T-cell (primary cell): ENCODE measurements at regions of chr9 and their contacts with region 1.

Region 1: DNA sequence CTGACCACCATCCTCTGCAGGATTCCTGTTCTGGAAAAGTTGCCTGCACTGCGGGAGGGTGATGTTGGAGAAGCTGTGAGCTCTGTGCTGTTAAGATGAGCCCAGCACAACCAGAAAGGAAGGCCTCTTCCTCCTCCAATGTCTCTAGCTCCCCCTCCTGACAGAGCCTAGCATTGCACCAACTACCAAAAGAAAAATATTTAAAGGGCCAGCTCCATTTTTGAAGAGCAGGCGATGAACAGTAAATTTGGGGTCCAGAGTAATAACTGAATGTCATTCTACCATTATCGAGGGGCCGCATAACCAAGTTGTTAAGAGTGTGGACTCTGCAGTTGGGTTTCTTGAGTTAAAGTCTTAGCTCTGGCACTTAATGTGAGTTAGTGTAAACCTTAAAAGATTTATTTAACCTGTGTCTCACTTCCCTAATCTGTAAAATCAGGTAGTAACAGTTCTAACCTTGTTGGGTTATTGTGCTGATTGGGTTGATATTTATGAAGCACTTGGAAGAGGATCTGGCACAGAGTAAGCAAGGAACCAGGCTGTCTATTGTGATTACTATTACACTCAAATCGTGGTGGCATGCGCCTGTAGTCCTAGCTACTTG is 3.9 kb downstream of the TEX53 start:
- DNase-seq: peak; percentile 48 to 88 (median 75)
- ATAC-seq: peak; percentile 81 to 93 (median 91)
- H3K4me3 ChIP-seq: no peak overlapping the region
- H3K4me3 Mint-ChIP-seq: no peak overlapping the region
- H3K27ac ChIP-seq: no peak overlapping the region
- H3K27ac Mint-ChIP-seq: peak overlapping the region in 1 of 2 donors; percentile 28
- H3K4me1 ChIP-seq: peaks cover 7 to 11% of the 10 kb centered on the region in 2 experiments
- H3K4me1 Mint-ChIP-seq: peaks cover 21 to 22% (median 22%) of the 10 kb centered on the region in 3 donors
- H3K27me3 ChIP-seq: no peaks in the 10 kb centered on the region
- H3K27me3 Mint-ChIP-seq: no peaks in the 10 kb centered on the region

Region 2: GRCh38 chr9:113886466-113886865 is 767.2 kb before region 1 on chr9:
- CTCF ChIA-PET with region 1: no interaction called
- POLR2A ChIA-PET with region 1: no interaction called
- DNase-seq: peak in 1 of 35 experiments; percentile 7
- ATAC-seq: no peak
- H3K4me3 ChIP-seq: peak overlapping the region in 1 of 2 donors; percentile 8
- H3K4me3 Mint-ChIP-seq: peak overlapping the region; percentile 62 to 75 (median 71)
- H3K27ac ChIP-seq: no peak overlapping the region
- H3K27ac Mint-ChIP-seq: peak overlapping the region in 1 of 2 donors; percentile 68
- H3K4me1 ChIP-seq: peaks cover 0 to 4% of the 10 kb centered on the region in 2 experiments
- H3K4me1 Mint-ChIP-seq: peaks cover 11 to 21% (median 20%) of the 10 kb centered on the region in 3 donors
- H3K27me3 ChIP-seq: no peaks in the 10 kb centered on the region
- H3K27me3 Mint-ChIP-seq: no peaks in the 10 kb centered on the region

Region 3: GRCh38 chr9:114405294-114406034 is 248.2 kb before region 1 on chr9:
- CTCF ChIA-PET with region 1: interaction called, 54 to 121 read pairs
- POLR2A ChIA-PET with region 1: no interaction called
- DNase-seq: peak; percentile 57 to 91 (median 76)
- ATAC-seq: peak; percentile 93 to 100 (median 97)
- H3K4me3 ChIP-seq: no peak overlapping the region
- H3K4me3 Mint-ChIP-seq: no peak overlapping the region
- H3K27ac ChIP-seq: no peak overlapping the region
- H3K27ac Mint-ChIP-seq: peak overlapping the region; percentile 62 to 68
- H3K4me1 ChIP-seq: peaks cover 0 to 10% of the 10 kb centered on the region in 2 experiments
- H3K4me1 Mint-ChIP-seq: peaks cover 6 to 8% (median 6%) of the 10 kb centered on the region in 3 donors
- H3K27me3 ChIP-seq: no peaks in the 10 kb centered on the region
- H3K27me3 Mint-ChIP-seq: no peaks in the 10 kb centered on the region

Region 4: DNA sequence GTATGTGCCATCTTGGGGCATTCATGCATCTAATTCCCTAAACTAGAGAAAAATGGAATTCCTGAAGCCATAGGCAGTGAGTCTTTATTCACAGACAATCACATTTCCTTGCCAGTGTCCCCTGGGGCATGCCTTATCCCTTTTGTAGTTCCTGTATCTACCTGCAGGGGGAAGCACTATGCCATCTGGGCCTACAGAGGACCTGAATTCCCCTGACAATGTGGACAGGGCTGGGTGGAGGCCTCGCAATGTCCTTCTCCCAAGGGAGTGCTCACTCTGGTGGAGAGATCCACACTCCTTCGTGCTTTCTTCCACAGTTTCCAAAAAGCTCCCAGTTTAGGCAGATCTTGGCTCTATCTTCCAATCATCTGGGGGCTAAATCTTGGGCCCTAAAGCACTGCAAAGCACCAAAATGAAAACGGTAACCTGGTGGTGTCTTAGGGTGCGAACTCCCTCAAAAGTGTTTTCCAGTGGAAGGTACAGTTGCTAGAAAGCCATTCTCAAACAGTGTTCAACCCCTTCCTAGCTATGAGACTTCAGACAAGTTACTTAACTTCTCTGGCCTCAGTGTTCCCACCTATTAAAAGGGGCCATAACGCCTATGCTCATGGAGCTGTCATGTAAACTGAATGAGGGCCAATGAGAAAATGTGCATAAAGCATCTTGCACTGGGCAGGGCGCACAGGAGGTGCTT is 165.9 kb before region 1 on chr9:
- CTCF ChIA-PET with region 1: interaction called, 25 to 32 read pairs
- POLR2A ChIA-PET with region 1: no interaction called
- DNase-seq: peak in 34 of 35 experiments; percentile 10 to 85 (median 44)
- ATAC-seq: peak; percentile 60 to 86 (median 74)
- H3K4me3 ChIP-seq: no peak overlapping the region
- H3K4me3 Mint-ChIP-seq: no peak overlapping the region
- H3K27ac ChIP-seq: peak overlapping the region; percentile 15
- H3K27ac Mint-ChIP-seq: peak overlapping the region; percentile 0 to 7
- H3K4me1 ChIP-seq: peaks cover 0 to 20% of the 10 kb centered on the region in 2 experiments
- H3K4me1 Mint-ChIP-seq: peaks cover 5 to 35% (median 30%) of the 10 kb centered on the region in 3 donors
- H3K27me3 ChIP-seq: no peaks in the 10 kb centered on the region
- H3K27me3 Mint-ChIP-seq: peaks cover 0 to 3% of the 10 kb centered on the region in 2 donors

Region 5: GRCh38 chr9:114505187-114506081 is 148.2 kb before region 1 on chr9 and contains the start of gene WHRN:
- CTCF ChIA-PET with region 1: interaction called, 3 to 13 read pairs
- POLR2A ChIA-PET with region 1: no interaction called
- DNase-seq: peak; percentile 63 to 95 (median 88)
- ATAC-seq: peak; percentile 83 to 92 (median 86)
- H3K4me3 ChIP-seq: peak within 1 kb of the TSS; percentile 65 to 71
- H3K4me3 Mint-ChIP-seq: peak within 1 kb of the TSS; percentile 79 to 85 (median 80)
- H3K27ac ChIP-seq: peak within 1 kb of the TSS; percentile 55
- H3K27ac Mint-ChIP-seq: peak within 1 kb of the TSS in 1 of 2 donors; percentile 52
- H3K4me1 ChIP-seq: peaks cover 2 to 28% of the 10 kb centered on the region in 2 experiments
- H3K4me1 Mint-ChIP-seq: peaks cover 18 to 40% (median 40%) of the 10 kb centered on the region in 3 donors
- H3K27me3 ChIP-seq: peaks cover 0 to 18% of the 10 kb centered on the region in 2 experiments
- H3K27me3 Mint-ChIP-seq: peaks cover 20 to 27% of the 10 kb centered on the region in 2 donors
- total RNA-seq, gene WHRN: 11.4 to 46.0 (median 13.0) TPM

Region 6: GRCh38 chr9:114538241-114538640 is 115.4 kb before region 1 on chr9:
- CTCF ChIA-PET with region 1: interaction called, 6 to 15 read pairs
- POLR2A ChIA-PET with region 1: no interaction called
- DNase-seq: peak in 28 of 35 experiments; percentile 2 to 49 (median 13)
- ATAC-seq: peak; percentile 78 to 93 (median 85)
- H3K4me3 ChIP-seq: no peak overlapping the region
- H3K4me3 Mint-ChIP-seq: no peak overlapping the region
- H3K27ac ChIP-seq: no peak overlapping the region
- H3K27ac Mint-ChIP-seq: no peak overlapping the region
- H3K4me1 ChIP-seq: no peaks in the 10 kb centered on the region
- H3K4me1 Mint-ChIP-seq: peaks cover 4 to 6% (median 5%) of the 10 kb centered on the region in 3 donors
- H3K27me3 ChIP-seq: peaks cover 0 to 2% of the 10 kb centered on the region in 2 experiments
- H3K27me3 Mint-ChIP-seq: no peaks in the 10 kb centered on the region

Region 7: DNA sequence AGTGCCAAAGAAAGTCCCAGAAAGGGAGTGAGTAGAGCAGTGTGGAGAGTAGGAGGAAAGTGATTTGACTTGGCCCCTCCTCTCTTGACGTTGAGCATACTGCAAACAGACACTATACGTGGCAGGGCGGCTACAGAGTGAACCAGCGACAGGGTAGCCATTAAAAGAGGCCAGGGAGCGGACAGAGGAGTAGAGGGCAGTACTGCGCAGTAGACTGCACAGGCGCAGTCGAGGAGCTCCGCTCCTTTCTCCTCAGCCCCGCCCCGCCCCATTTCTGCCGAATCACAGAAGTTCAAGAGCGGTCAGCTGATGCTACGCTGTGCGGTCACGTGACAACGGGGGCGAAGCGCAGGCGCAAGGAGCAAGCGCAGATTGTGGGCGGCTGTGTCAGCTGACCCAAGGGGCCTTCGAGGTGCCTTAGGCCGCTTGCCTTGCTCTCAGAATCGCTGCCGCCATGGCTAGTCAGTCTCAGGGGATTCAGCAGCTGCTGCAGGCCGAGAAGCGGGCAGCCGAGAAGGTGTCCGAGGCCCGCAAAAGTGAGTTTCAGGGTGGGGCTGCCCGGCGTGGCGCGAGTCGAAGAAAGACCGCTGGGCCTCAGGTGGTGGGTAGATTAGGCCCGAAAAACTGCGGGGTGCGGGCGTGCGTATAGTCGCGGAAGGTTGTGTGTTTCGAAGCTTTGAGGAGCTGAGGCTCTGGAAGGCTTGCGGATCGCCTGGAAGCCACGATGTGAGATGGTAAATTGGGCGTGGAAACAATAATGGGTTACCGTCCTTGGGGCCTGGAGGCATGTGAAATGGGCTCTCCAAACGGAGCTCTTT is 66.1 kb before region 1 on chr9 and contains the start of gene ATP6V1G1:
- CTCF ChIA-PET with region 1: interaction called, 25 to 95 read pairs
- POLR2A ChIA-PET with region 1: interaction called, 3 to 4 read pairs
- DNase-seq: peak; percentile 94 to 100 (median 99)
- ATAC-seq: peak; percentile 89 to 93 (median 92)
- H3K4me3 ChIP-seq: peak within 1 kb of the TSS; percentile 84 to 95
- H3K4me3 Mint-ChIP-seq: peak within 1 kb of the TSS; percentile 97 to 100 (median 100)
- H3K27ac ChIP-seq: peak within 1 kb of the TSS; percentile 92
- H3K27ac Mint-ChIP-seq: peak within 1 kb of the TSS; percentile 99 to 100
- H3K4me1 ChIP-seq: peaks cover 28 to 45% of the 10 kb centered on the region in 2 experiments
- H3K4me1 Mint-ChIP-seq: peaks cover 44 to 54% (median 50%) of the 10 kb centered on the region in 3 donors
- H3K27me3 ChIP-seq: no peaks in the 10 kb centered on the region
- H3K27me3 Mint-ChIP-seq: no peaks in the 10 kb centered on the region
- total RNA-seq, gene ATP6V1G1: 99.2 to 109 (median 103) TPM